OCI-LY7 (cell line): ENCODE measurements at regions of chr3 and their contacts with region 1.

Region 1: GRCh38 chr3:69306239-69307185 is 79.4 kb downstream of the FRMD4B start:
- DNase-seq: peak; percentile 66
- H3K4me3 ChIP-seq: no peak overlapping the region
- H3K27ac ChIP-seq: no peak overlapping the region
- H3K4me1 ChIP-seq: no peaks in the 10 kb centered on the region
- CTCF ChIP-seq: peak; percentile 90

Region 2: GRCh38 chr3:69120879-69121464 is 185.5 kb before region 1 on chr3:
- CTCF ChIA-PET with region 1: interaction called, 3 read pairs
- POLR2A ChIA-PET with region 1: no interaction called
- intact Hi-C with region 1: loop called (anchors 2 kb)
- DNase-seq: peak; percentile 78
- H3K4me3 ChIP-seq: no peak overlapping the region
- H3K27ac ChIP-seq: no peak overlapping the region
- H3K4me1 ChIP-seq: no peaks in the 10 kb centered on the region
- CTCF ChIP-seq: peak; percentile 95

Region 3: DNA sequence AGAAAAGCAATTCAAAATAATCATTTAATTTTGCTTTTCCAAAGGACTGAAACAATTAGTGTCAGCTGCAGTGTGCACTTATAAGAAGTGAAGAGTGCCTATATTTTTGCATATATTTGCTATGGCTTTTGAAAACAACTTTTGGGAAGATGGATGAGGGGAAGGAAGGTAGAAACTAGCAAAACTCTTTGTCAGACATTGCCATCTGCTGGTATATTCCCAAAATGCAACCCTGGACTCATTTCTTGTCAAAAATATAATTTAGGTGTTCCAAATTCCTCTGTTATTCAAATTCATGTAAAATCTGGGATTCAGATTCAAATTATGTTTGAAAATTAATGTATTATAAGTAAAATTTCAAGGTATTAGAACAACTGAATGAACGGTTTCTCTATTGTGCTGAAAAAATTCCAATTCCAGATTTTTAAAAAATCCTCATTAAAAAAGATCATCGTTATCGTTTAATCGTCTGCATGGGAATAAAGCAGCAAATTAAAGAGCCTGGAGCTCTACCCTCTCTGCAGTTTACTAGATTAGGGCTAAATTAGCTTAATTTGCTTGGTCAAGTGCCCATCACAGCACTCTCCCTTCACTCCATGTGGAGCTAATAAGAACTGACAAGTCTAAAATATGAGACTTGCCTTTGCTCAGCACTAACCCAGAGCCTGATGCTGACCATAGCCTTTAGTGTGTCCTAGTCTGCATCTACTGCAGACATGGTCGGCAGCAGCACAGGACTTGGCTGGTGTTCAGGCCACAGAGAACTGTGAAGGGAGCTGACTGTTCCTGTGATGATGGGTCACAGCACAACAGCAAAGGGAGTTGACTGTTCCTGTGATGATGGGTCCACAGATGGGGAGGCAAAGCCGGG is 364.8 kb after region 1 on chr3:
- CTCF ChIA-PET with region 1: no interaction called
- POLR2A ChIA-PET with region 1: no interaction called
- intact Hi-C with region 1: loop called (anchors 1 kb)
- DNase-seq: peak; percentile 27
- H3K4me3 ChIP-seq: no peak overlapping the region
- H3K27ac ChIP-seq: no peak overlapping the region
- H3K4me1 ChIP-seq: no peaks in the 10 kb centered on the region
- CTCF ChIP-seq: peak; percentile 84